ENCODE measurements at regions of chr5 and their contacts with region 1.

Region 1: DNA sequence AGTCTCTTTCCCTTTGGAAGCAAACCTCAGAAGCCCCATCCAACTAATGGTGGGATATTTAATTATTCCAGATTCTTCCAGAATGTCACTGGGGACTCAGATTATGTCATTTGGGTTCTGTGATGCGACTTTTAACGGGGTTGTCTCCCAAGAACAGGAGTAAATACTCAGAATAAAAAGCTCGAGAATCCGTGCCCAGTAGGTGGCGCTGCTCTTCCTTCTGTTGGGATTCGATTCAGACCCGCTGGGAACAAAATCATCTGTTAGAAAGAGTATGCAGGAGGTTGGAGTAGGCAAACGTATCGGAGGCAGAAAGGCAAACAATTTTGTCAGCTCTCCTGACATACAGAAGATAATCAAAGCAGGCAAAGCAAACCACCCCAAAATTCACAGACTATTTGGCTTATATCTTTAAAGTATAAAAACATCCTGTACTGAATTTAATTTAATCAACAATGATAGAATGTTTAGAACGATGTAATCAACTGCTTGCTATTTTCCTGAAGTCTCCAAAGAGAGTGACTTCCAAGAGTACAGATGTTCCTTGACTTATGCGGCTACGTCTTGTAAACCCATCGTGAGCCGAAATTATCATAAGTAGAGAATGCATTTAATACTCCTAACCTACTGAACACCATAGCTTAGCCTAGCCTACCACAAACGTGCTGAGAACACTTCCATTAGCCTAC is 169.8 kb upstream of the RAI14 start:
- DNase-seq: peak; percentile 94
- ATAC-seq: peak; percentile 37
- H3K4me3 ChIP-seq: peak overlapping the region; percentile 6; the same call in 1 of the 2 replicates
- H3K27ac ChIP-seq: peak overlapping the region; percentile 90
- H3K4me1 ChIP-seq: peaks cover 52% of the 10 kb centered on the region
- H3K27me3 ChIP-seq: no peaks in the 10 kb centered on the region
- CTCF ChIP-seq: peak; percentile 96

Region 2: GRCh38 chr5:34632807-34633422 is 146.6 kb after region 1 on chr5:
- CTCF ChIA-PET with region 1: no interaction called
- POLR2A ChIA-PET with region 1: no interaction called
- intact Hi-C with region 1: no loop called
- DNase-seq: no peak
- ATAC-seq: no peak
- H3K4me3 ChIP-seq: no peak overlapping the region
- H3K27ac ChIP-seq: no peak overlapping the region
- H3K4me1 ChIP-seq: no peaks in the 10 kb centered on the region
- H3K27me3 ChIP-seq: no peaks in the 10 kb centered on the region
- CTCF ChIP-seq: no peak

Region 3: DNA sequence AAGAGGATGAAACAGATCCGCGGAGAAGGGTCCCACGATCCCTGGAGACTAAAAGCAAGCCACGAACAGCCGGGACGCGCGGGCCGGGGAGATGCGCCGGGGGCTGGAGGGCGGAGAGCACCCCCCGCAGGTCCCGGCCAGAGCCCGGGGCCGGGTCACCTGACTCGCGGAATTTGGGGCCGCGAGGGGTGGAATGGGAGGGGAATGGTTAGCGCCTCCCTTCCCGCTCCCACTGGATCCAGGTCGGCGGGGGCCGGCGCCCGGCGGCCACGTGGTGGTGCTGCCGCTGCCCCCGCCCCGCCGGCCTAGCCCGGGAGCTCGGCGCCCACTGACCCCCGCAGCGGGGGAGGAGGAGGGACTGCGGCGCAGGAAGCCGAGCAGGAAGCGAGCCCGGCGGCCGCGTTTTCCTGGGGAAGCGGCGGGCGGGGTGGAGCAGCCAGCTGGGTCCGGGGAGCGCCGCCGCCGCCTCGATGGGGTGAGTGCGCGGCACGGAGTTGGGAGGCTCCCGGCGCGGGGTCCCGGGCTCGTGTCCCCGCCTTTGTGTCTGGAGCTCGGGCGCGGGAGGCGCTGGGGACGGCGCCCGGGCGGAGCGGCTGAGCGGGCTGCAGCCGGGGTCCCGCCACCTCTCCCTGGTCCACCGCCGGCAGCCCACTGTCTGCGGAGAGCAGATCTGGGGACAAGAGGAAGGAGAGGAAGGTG is 169.8 kb after region 1 on chr5 and contains the start of gene RAI14:
- CTCF ChIA-PET with region 1: no interaction called
- POLR2A ChIA-PET with region 1: no interaction called
- intact Hi-C with region 1: loop called (anchors 2 kb)
- DNase-seq: peak; percentile 86
- ATAC-seq: peak; percentile 71
- H3K4me3 ChIP-seq: peak within 1 kb of the TSS; percentile 97
- H3K27ac ChIP-seq: peak within 1 kb of the TSS; percentile 89
- H3K4me1 ChIP-seq: peaks cover 37% of the 10 kb centered on the region
- H3K27me3 ChIP-seq: no peaks in the 10 kb centered on the region
- CTCF ChIP-seq: no peak
- total RNA-seq, gene RAI14: 54.4 and 73.5 TPM in 2 replicates

Region 4: GRCh38 chr5:34751807-34752736 is 265.8 kb after region 1 on chr5:
- CTCF ChIA-PET with region 1: no interaction called
- POLR2A ChIA-PET with region 1: no interaction called
- intact Hi-C with region 1: loop called (anchors 5 kb)
- DNase-seq: peak; percentile 19
- ATAC-seq: peak; percentile 71
- H3K4me3 ChIP-seq: no peak overlapping the region
- H3K27ac ChIP-seq: peak overlapping the region; percentile 88
- H3K4me1 ChIP-seq: peaks cover 13% of the 10 kb centered on the region
- H3K27me3 ChIP-seq: no peaks in the 10 kb centered on the region
- CTCF ChIP-seq: no peak

Region 5: DNA sequence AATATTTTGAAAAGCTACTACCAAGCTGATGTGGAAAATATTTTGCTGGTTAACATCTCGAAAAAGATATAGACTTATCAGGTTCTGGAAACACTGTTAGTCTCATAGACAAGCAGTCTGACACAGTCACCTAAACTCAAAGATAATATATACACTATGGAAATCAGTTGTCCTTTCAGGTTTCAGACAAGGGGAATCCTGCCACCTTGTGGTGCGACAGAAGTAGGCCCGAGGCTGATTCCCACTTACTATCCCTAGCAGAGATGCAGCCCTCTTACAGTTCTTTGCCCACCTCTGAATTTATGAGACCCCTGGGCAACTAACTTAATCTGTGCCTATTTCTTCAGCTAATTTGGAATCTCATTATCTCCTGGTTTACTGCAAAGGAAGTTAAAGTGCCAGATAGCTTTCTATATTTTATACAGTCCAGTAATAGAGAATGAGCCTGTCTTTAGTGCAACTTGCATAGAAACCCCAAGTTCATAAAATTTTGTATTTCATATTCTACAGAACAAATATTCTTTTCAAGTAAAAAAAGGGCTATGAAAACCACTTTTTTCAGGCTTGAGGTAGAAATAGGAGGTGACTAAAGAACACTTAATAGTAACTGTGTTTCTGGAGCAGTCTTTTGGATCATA is 412.1 kb after region 1 on chr5:
- CTCF ChIA-PET with region 1: interaction called, 5 read pairs
- POLR2A ChIA-PET with region 1: no interaction called
- intact Hi-C with region 1: loop called (anchors 1 kb)
- DNase-seq: peak; percentile 80
- ATAC-seq: peak; percentile 96
- H3K4me3 ChIP-seq: no peak overlapping the region
- H3K27ac ChIP-seq: no peak overlapping the region
- H3K4me1 ChIP-seq: peaks cover 14% of the 10 kb centered on the region
- H3K27me3 ChIP-seq: no peaks in the 10 kb centered on the region
- CTCF ChIP-seq: peak; percentile 93